WTC11 (cell line): ENCODE measurements at regions of chr15 and their contacts with region 1.

Region 1: GRCh38 chr15:91271565-91272153 is 171.6 kb downstream of the SV2B start:
- DNase-seq: peak; percentile 64
- ATAC-seq: peak; percentile 67; the same call in 1 of the 2 replicates
- H3K4me3 Mint-ChIP-seq: no peak overlapping the region
- H3K27ac Mint-ChIP-seq: no peak overlapping the region
- H3K4me1 Mint-ChIP-seq: no peaks in the 10 kb centered on the region
- H3K27me3 Mint-ChIP-seq: peaks cover 13% of the 10 kb centered on the region
- CTCF ChIP-seq: peak; percentile 69

Region 2: GRCh38 chr15:90946538-90946937 is 325.1 kb before region 1 on chr15:
- CTCF ChIA-PET with region 1: no interaction called
- POLR2A ChIA-PET with region 1: no interaction called
- DNase-seq: no peak
- ATAC-seq: no peak
- H3K4me3 Mint-ChIP-seq: no peak overlapping the region
- H3K27ac Mint-ChIP-seq: no peak overlapping the region
- H3K4me1 Mint-ChIP-seq: no peaks in the 10 kb centered on the region
- H3K27me3 Mint-ChIP-seq: no peaks in the 10 kb centered on the region
- CTCF ChIP-seq: no peak

Region 3: DNA sequence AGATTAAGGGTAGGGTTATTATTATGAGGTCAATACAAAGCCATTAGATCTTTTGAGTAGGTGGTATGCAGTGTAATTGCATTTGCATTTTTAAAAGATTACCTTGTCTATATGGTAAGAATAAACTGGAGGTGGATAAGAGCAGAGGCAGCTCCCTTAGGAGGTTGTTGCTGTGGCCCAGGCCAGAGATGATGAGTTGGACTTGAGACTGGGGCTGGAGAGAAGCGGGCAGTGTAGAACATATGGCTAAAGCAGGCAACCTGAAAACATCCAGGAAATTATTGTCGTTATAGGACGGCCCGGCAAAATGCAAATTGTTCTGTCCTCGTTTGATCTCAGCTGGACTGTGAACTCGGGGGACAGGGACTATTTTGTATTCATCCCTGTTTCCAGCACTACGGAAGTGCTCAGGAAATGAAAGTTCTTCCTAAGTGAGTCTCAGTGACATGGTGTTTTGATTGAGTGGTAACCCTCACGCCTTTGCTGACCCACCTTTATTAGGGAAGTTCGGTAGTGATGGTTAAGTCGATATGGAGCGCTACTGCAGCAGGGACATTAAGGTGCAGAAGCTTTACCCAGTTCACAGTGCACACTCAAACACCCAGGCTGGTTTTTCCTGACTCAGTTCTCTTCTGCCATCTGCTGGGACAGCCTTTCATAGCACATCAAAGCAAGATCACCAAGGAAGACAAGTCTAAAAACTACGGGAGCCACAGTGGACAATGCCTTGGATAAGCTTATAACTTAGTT is 222.1 kb before region 1 on chr15:
- CTCF ChIA-PET with region 1: interaction called, 41 read pairs
- POLR2A ChIA-PET with region 1: no interaction called
- DNase-seq: peak; percentile 60
- ATAC-seq: peak; percentile 96
- H3K4me3 Mint-ChIP-seq: no peak overlapping the region
- H3K27ac Mint-ChIP-seq: no peak overlapping the region
- H3K4me1 Mint-ChIP-seq: no peaks in the 10 kb centered on the region
- H3K27me3 Mint-ChIP-seq: no peaks in the 10 kb centered on the region; the same call in 1 of the 2 replicates
- CTCF ChIP-seq: no peak

Region 4: DNA sequence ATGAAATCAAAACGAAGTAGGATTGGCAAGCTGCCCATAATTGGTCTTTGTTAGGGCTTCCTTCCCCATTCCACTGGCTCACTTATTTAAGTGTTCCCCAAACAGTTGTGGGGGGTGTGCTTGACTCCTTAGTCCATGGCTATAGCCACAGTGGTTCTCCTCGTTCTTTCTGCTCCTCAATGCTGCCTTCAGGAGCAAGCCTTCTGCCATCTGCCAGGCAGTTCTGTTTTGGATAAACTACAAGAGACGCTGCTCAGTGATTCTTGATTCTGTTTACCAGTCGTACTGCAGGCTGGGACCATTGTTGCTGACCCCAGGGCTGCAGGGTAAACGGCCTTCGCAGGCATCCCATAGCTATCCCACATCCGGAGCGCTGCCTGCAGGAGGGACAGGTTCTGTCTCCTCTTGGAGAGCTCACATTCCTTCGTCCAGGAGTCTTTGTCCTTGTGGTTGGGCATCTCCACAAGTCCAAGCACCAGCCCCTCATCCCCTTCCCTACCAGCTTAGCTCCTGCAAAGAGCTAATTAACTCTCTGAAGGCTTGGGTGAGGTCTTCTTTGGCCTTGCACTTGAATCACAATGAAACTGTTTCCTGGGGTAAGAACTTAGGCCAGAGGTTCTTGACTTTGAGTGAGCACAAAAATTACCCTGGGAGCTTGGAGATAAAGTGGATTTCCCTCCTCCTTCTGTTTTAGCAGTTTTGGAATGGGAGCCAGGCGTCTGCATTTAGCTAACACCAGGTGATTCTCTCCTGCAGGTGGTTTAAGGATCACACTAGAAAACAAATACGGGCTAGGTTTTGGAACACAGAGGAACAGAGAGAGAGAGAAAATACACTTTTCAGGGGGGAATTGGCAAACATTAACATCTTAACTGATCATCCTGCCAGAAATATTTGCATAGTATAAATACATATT is 56.7 kb before region 1 on chr15:
- CTCF ChIA-PET with region 1: interaction called, 10 read pairs
- POLR2A ChIA-PET with region 1: no interaction called
- DNase-seq: peak; percentile 30
- ATAC-seq: peak; percentile 86
- H3K4me3 Mint-ChIP-seq: no peak overlapping the region
- H3K27ac Mint-ChIP-seq: peak overlapping the region; percentile 63
- H3K4me1 Mint-ChIP-seq: peaks cover 15% of the 10 kb centered on the region
- H3K27me3 Mint-ChIP-seq: no peaks in the 10 kb centered on the region
- CTCF ChIP-seq: no peak

Region 5: DNA sequence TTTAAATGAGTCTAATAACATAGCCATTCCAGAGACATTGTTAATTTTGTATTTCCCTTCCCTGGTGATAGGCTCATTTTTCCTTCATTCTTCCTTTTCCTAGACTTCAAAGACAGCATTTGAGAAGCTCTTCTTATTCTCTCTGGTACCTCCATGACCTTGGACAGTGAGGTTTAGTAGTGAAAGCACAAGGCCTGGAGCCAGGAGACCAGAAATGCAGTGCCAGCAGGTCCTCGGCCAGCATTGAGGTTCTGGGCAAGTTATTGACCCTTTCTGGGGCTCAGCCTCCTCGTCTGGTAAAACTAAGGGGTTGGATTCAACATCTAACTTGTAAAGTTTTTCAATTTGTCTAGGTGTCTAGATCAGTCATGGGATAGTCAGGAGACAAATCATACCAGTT is 24.7 kb before region 1 on chr15:
- CTCF ChIA-PET with region 1: interaction called, 26 read pairs
- POLR2A ChIA-PET with region 1: no interaction called
- DNase-seq: no peak
- ATAC-seq: no peak
- H3K4me3 Mint-ChIP-seq: no peak overlapping the region
- H3K27ac Mint-ChIP-seq: no peak overlapping the region
- H3K4me1 Mint-ChIP-seq: peaks cover 4% of the 10 kb centered on the region; the same call in 1 of the 2 replicates
- H3K27me3 Mint-ChIP-seq: peaks cover 4% of the 10 kb centered on the region; the same call in 1 of the 2 replicates
- CTCF ChIP-seq: no peak

Region 6: GRCh38 chr15:91258425-91258779 is 13.3 kb before region 1 on chr15:
- CTCF ChIA-PET with region 1: interaction called, 38 read pairs
- POLR2A ChIA-PET with region 1: no interaction called
- DNase-seq: peak; percentile 18
- ATAC-seq: peak; percentile 91
- H3K4me3 Mint-ChIP-seq: no peak overlapping the region
- H3K27ac Mint-ChIP-seq: no peak overlapping the region
- H3K4me1 Mint-ChIP-seq: no peaks in the 10 kb centered on the region
- H3K27me3 Mint-ChIP-seq: no peaks in the 10 kb centered on the region
- CTCF ChIP-seq: no peak

Region 7: DNA sequence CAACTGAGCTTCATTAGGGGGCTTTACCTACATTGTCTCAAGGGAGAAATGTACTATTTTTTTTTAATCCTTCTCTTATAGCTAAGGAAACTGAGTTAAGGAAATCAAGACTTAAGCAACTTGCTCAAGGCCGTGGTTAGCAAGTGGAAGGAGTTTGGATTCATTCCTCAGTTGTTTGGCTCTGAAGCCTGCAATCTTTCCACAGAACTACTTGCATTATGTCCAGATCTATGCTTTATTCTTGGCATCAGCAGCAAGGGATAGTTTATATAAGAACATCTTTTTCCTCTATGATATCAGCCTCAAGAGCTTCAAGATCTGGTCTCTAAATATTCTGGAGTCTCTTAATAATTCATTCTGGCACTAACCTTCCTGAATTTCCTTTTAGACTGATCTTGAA is 10.8 kb after region 1 on chr15:
- CTCF ChIA-PET with region 1: interaction called, 11 read pairs
- POLR2A ChIA-PET with region 1: no interaction called
- DNase-seq: no peak
- ATAC-seq: no peak
- H3K4me3 Mint-ChIP-seq: no peak overlapping the region
- H3K27ac Mint-ChIP-seq: no peak overlapping the region
- H3K4me1 Mint-ChIP-seq: no peaks in the 10 kb centered on the region
- H3K27me3 Mint-ChIP-seq: no peaks in the 10 kb centered on the region
- CTCF ChIP-seq: no peak

Region 8: GRCh38 chr15:91329914-91330313 is 58.3 kb after region 1 on chr15:
- CTCF ChIA-PET with region 1: no interaction called
- POLR2A ChIA-PET with region 1: no interaction called
- DNase-seq: no peak
- ATAC-seq: no peak
- H3K4me3 Mint-ChIP-seq: no peak overlapping the region
- H3K27ac Mint-ChIP-seq: no peak overlapping the region
- H3K4me1 Mint-ChIP-seq: no peaks in the 10 kb centered on the region
- H3K27me3 Mint-ChIP-seq: no peaks in the 10 kb centered on the region
- CTCF ChIP-seq: no peak